ENCODE measurements at regions of chr15 and their contacts with region 1.

Region 1: DNA sequence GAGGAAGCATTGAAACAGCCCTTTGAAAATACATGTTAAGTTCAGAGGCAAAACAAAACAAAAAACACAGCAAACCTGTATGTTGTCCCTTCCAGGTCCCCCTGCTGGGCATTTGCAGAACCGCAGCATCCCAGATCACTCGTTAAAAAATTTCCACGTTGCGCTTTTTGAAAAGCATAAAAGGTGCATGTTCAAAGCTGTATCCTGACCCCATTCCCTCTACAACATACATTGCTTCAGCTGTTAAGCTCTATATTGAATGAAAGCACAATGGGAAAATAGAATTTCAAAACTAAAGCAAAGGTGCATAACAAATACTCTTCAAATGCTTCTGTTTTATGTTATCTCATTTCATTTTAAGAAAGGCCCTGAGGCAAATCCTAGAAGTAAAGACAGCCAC is 328.3 kb downstream of the THSD4 start:
- DNase-seq: no peak
- ATAC-seq: no peak
- H3K4me3 ChIP-seq: no peak overlapping the region
- H3K27ac ChIP-seq: no peak overlapping the region; the same call in 1 of the 2 replicates
- H3K4me1 ChIP-seq: peaks cover 58 to 68% of the 10 kb centered on the region in 2 experiments
- H3K27me3 ChIP-seq: no peaks in the 10 kb centered on the region
- CTCF ChIP-seq: peak; percentile 50 to 89 (median 84); a peak in 5 of 6 replicates
- POLR2A ChIP-seq: no peak
- RAD21 ChIP-seq: peak; percentile 37; the same call in 1 of the 2 replicates

Region 2: DNA sequence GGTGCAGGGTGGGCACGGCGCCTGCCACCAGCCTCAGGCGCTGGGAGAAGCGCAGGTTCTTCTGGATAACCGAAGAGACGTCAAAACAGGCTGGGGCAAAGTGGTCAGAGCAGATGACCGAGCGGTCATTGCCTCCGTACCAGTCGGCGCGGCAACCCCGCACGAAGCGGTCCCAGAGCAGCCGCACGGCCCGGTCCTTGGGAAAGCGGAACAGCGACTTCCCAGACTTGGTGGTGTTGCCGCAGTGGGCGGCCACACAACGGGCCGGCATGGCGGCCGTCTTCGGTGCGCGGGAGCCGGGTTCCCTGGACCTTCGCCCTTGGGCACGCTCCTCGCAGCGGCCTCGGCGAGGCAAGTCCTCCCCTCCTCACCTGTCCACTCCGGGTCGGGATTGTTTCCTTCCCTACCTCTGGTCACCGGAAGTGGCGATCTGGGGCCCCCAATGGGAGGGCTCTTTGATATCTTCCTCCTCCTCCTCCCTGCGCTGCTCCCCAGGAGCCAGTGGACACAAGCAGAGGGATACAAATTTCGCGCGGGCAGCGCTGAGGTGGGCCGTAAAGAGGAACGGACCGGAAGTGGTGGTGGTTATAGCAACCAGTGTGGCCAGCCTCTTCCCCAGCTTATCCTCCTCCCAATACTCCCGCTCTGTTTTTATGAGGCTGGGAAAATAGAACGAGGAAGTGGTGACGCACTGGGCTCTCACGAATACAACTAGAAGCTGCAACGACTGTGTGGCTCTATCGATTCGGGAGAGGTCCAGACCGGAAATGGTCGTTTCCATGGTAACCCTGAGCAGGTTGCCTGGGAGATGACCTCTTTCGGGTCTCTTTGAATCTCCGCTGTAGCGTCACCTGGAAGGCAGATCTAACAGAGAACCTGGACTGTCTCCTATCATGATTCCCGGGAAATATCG is 551.3 kb before region 1 on chr15 and contains the starts of genes LRRC49 and THAP10:
- CTCF ChIA-PET with region 1: no interaction called
- POLR2A ChIA-PET with region 1: no interaction called
- RAD21 ChIA-PET with region 1: no interaction called
- intact Hi-C with region 1: loop called (anchors 2 kb)
- DNase-seq: peak; percentile 88
- ATAC-seq: peak; percentile 96
- H3K4me3 ChIP-seq: peak within 1 kb of the TSS; percentile 77 to 85
- H3K27ac ChIP-seq: peak within 1 kb of the TSS; percentile 70
- H3K4me1 ChIP-seq: peaks cover 12 to 21% of the 10 kb centered on the region in 2 experiments
- H3K27me3 ChIP-seq: no peaks in the 10 kb centered on the region
- CTCF ChIP-seq: no peak
- POLR2A ChIP-seq: no peak
- RAD21 ChIP-seq: no peak
- total RNA-seq, gene LRRC49: 7.4 TPM
- total RNA-seq, gene THAP10: 2.8 TPM

Region 3: DNA sequence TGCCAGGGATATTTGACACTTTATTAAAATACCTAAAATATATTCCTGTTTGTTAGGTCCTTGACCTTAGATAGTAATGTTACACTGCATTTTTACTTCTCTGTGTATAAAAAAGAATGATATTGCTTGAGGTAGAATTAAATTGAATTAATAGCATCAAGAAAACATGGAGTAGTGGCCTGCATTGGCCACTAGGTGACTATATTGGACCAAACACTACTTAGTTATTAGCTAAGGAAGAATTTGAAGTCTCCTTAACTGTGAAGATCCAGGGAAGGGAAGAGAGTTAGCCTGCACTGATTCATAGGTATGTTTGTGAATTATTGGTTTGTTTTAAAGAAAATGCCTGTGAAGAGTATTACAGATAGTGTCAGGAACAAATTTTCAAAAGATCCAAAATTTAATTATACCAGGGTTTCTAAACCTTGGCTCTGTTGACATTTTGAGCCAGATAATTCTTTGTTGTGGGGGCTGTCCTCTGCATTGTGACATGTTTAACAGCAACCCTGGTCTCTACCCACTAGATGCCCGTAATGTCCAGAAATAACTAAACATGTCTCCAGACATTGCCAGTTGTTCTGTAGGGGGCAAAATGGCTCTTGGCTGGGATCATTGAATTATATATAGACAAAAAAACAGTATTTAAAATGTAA is 431.9 kb before region 1 on chr15:
- CTCF ChIA-PET with region 1: interaction called, 11 read pairs
- POLR2A ChIA-PET with region 1: interaction called, 3 read pairs
- RAD21 ChIA-PET with region 1: interaction called, 4 to 8 read pairs
- intact Hi-C with region 1: loop called (anchors 2 kb)
- DNase-seq: peak; percentile 28
- ATAC-seq: peak; percentile 84
- H3K4me3 ChIP-seq: no peak overlapping the region
- H3K27ac ChIP-seq: no peak overlapping the region
- H3K4me1 ChIP-seq: no peaks in the 10 kb centered on the region
- H3K27me3 ChIP-seq: no peaks in the 10 kb centered on the region
- CTCF ChIP-seq: peak; percentile 73 to 93 (median 77)
- POLR2A ChIP-seq: no peak
- RAD21 ChIP-seq: peak; percentile 86

Region 4: DNA sequence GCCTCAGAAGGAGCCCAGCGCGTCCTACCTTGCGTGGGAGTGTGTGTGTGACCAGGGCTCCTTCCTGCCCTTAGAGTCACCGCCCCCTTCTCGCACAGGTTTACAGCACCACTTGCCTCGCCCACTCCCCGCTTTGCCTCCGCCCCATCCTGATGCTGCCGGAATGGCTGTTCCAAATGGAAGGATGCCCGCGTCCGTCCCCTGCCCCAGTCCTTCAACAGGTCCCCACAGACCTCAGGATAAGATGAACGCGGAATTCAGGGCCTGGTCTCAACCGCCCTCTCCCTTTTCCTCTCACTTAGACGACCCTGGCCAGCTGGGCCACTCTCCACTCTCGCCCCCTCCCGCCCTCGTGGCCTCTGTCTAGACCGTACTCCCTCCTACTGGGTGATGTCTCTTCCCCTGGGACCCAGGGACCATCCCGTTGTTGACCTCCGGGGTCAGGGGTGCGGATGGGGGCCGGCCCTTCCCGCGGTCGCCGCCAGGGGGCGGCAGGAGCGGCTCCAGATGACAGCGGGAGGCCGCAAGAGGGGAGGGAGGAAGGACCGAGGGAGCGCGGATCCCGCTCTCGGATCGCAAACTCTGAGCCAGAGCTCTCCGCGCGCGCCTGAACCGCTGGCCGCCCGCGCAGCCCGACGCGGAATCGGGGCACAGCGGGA is 328.5 kb before region 1 on chr15 and contains the start of gene THSD4:
- CTCF ChIA-PET with region 1: interaction called, 10 read pairs
- POLR2A ChIA-PET with region 1: no interaction called
- RAD21 ChIA-PET with region 1: no interaction called
- intact Hi-C with region 1: loop called (anchors 2 kb)
- DNase-seq: no peak
- ATAC-seq: peak; percentile 79
- H3K4me3 ChIP-seq: peak within 1 kb of the TSS; percentile 71 to 72
- H3K27ac ChIP-seq: peak within 1 kb of the TSS; percentile 84
- H3K4me1 ChIP-seq: peaks cover 21 to 31% of the 10 kb centered on the region in 2 experiments
- H3K27me3 ChIP-seq: no peaks in the 10 kb centered on the region
- CTCF ChIP-seq: peak; percentile 64 to 98 (median 97)
- POLR2A ChIP-seq: no peak
- RAD21 ChIP-seq: peak; percentile 66
- total RNA-seq, gene THSD4: 30.5 TPM

Region 5: GRCh38 chr15:71294886-71295638 is 148.5 kb before region 1 on chr15:
- CTCF ChIA-PET with region 1: interaction called, 7 read pairs
- POLR2A ChIA-PET with region 1: no interaction called
- RAD21 ChIA-PET with region 1: no interaction called
- intact Hi-C with region 1: loop called (anchors 2 kb)
- DNase-seq: peak; percentile 100
- ATAC-seq: peak; percentile 83
- H3K4me3 ChIP-seq: peak overlapping the region; percentile 1 to 51
- H3K27ac ChIP-seq: peak overlapping the region; percentile 97
- H3K4me1 ChIP-seq: peaks cover 49 to 65% of the 10 kb centered on the region in 2 experiments
- H3K27me3 ChIP-seq: no peaks in the 10 kb centered on the region
- CTCF ChIP-seq: no peak
- POLR2A ChIP-seq: no peak
- RAD21 ChIP-seq: peak; percentile 39; the same call in 1 of the 2 replicates

Region 6: DNA sequence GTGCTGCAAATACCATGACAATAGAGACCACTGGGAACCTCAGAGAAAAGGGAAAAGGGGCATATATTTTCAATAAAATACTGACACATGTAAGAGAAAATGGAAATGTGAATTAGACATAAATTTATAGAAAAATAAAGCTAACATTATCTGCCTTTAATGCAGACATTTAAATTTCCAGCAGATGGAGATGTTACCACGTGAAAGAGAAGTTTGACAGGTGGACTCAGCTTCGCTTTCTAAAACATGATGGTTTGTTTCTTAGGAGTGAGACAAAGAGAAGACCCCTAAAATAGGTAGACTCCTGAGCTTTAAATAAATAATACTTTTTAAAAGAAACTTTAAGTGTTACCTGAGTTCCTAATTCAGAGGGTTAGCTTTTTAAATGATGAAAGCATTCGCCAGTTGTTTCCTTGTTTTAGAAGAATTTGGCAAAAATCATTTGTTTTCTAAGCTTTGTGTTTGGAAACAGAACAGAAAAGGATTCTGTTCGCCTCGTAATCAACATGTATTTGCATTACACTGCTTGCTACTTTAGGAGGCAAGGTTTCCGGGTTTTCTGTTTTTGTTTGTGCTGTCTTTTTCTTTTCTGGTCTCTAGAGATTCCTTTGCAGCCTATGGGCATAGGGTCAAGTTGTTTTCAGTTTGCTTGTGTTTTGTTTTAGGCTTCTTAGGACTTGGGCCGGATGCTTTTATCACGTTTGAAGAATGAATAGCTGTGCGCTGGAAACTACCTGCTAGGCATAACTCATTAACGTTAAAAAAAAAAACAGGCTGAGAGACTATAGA is 56.9 kb before region 1 on chr15:
- CTCF ChIA-PET with region 1: interaction called, 48 read pairs
- POLR2A ChIA-PET with region 1: no interaction called
- RAD21 ChIA-PET with region 1: interaction called, 3 to 5 read pairs
- intact Hi-C with region 1: loop called (anchors 1 kb)
- DNase-seq: no peak
- ATAC-seq: no peak
- H3K4me3 ChIP-seq: no peak overlapping the region
- H3K27ac ChIP-seq: no peak overlapping the region
- H3K4me1 ChIP-seq: peaks cover 11 to 17% of the 10 kb centered on the region in 2 experiments
- H3K27me3 ChIP-seq: no peaks in the 10 kb centered on the region
- CTCF ChIP-seq: peak; percentile 12 to 49 (median 46); a peak in 4 of 6 replicates
- POLR2A ChIP-seq: no peak
- RAD21 ChIP-seq: peak; percentile 67

Measured in HCT116 (cell line).